ENCODE measurements at regions of chr2 and their contacts with region 1.

Region 1: DNA sequence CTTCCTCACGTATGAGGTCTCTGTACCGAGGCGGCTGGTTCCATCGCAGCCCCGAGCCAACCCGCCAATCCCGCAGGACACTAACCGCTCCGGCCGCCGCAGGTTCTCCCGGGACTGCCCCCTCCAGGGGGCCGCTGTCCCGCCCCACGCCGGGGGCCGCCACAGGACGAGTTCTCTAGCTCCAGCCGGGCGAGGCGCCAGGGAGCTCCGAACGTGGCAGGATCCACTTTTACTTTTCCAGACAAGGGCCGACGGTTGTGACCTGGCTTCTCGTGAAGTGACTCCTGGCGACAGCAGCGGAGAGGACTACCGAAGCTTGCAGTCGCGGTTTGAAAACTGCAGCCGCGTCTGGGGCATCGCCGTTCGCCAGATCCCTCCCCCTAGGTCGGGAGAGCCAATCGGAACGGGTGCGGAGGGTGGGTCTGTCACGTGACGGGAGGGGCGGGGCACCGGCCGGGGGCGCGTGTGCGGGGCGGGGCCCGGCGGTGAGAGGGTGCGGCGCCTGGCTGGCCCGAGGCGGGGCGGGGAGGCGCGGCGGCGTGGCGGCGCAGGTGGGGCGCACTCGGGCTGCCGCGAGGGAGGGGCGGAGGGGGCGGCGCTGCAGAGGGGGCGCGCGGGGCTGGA is at the start of gene STK17B:
- DNase-seq: peak; percentile 97
- ATAC-seq: peak; percentile 70
- H3K4me3 Mint-ChIP-seq: peak within 1 kb of the TSS; percentile 99
- H3K27ac Mint-ChIP-seq: peak within 1 kb of the TSS; percentile 91
- H3K4me1 Mint-ChIP-seq: peaks cover 34% of the 10 kb centered on the region
- H3K27me3 Mint-ChIP-seq: no peaks in the 10 kb centered on the region
- CTCF ChIP-seq: no peak
- total RNA-seq, gene STK17B: 237 to 250 TPM

Region 2: GRCh38 chr2:195656859-195657633 is 514.3 kb before region 1 on chr2 and contains the start of gene SLC39A10:
- CTCF ChIA-PET with region 1: no interaction called
- POLR2A ChIA-PET with region 1: interaction called, 3 read pairs
- intact Hi-C with region 1: loop called (anchors 10 kb)
- DNase-seq: peak; percentile 98
- ATAC-seq: peak; percentile 89
- H3K4me3 Mint-ChIP-seq: peak within 1 kb of the TSS; percentile 95
- H3K27ac Mint-ChIP-seq: peak within 1 kb of the TSS; percentile 100
- H3K4me1 Mint-ChIP-seq: peaks cover 20% of the 10 kb centered on the region
- H3K27me3 Mint-ChIP-seq: no peaks in the 10 kb centered on the region
- CTCF ChIP-seq: no peak
- total RNA-seq, gene SLC39A10: 25.6 to 25.8 TPM

Region 3: DNA sequence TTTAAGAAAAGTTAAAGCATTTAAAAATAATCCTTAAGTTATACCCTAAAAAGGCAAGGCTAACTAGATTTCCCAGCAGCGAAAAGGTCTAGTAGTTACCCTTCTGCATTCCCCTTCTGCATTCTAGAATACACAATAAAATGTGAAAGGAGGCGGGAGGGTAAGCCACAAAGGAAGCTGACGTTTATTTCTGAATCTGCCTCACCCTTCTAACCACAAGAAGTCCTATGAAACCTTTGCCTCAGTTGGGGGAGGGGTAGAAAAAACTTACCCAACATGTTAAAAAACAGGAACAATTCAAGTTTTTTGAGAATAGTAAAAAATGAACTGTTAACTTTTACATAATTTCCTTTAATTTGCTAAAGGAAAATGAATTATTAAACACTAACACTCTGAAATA is 11.3 kb before region 1 on chr2:
- CTCF ChIA-PET with region 1: interaction called, 6 read pairs
- POLR2A ChIA-PET with region 1: interaction called, 145 read pairs
- intact Hi-C with region 1: no loop called
- DNase-seq: peak; percentile 84
- ATAC-seq: peak; percentile 40
- H3K4me3 Mint-ChIP-seq: peak overlapping the region; percentile 99
- H3K27ac Mint-ChIP-seq: peak overlapping the region; percentile 83
- H3K4me1 Mint-ChIP-seq: peaks cover 49% of the 10 kb centered on the region
- H3K27me3 Mint-ChIP-seq: no peaks in the 10 kb centered on the region
- CTCF ChIP-seq: no peak

Region 4: DNA sequence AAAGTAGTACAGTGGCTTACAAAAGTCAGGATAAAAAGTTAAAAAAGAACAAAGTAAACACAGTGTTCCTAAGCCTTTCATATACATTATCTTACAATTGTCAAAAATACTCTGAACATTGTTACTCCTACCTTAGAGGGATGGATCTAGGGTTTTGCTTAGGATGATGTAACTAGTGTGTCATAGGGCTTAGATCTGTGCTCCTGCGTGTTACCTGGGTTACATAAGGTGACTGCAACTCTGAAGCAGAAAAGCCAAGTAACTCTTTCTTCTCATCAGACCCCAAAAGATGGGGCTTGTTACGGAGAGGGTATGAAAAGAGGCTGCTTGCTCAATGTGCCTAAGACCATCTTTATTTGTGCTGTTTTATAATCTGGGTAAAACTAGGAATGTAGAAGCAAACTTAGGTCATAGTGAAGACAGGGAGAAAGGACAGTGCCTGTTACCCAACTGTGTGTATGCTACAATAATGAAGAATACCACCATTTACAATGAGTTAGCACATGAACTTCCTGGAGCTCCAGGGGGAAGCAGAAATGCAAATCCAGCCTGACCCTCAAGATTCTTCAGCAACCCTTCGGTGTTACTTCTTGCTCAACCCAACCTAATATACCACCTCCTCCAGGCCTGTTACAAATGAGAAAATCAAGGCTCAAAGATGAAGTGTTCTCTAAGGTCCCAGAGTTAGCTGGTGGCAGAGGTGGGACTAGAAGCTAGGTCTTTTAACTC is 42.1 kb after region 1 on chr2:
- CTCF ChIA-PET with region 1: no interaction called
- POLR2A ChIA-PET with region 1: interaction called, 10 read pairs
- intact Hi-C with region 1: loop called (anchors 2 kb)
- DNase-seq: no peak
- ATAC-seq: peak; percentile 15
- H3K4me3 Mint-ChIP-seq: no peak overlapping the region
- H3K27ac Mint-ChIP-seq: peak overlapping the region; percentile 99
- H3K4me1 Mint-ChIP-seq: peaks cover 76% of the 10 kb centered on the region
- H3K27me3 Mint-ChIP-seq: no peaks in the 10 kb centered on the region
- CTCF ChIP-seq: no peak

Region 5: GRCh38 chr2:196239622-196240587 is 68.5 kb after region 1 on chr2:
- CTCF ChIA-PET with region 1: interaction called, 27 read pairs
- POLR2A ChIA-PET with region 1: interaction called, 56 read pairs
- intact Hi-C with region 1: loop called (anchors 1 kb)
- DNase-seq: peak; percentile 94
- ATAC-seq: peak; percentile 64
- H3K4me3 Mint-ChIP-seq: peak overlapping the region; percentile 81
- H3K27ac Mint-ChIP-seq: peak overlapping the region; percentile 87
- H3K4me1 Mint-ChIP-seq: peaks cover 70% of the 10 kb centered on the region
- H3K27me3 Mint-ChIP-seq: no peaks in the 10 kb centered on the region
- CTCF ChIP-seq: no peak

Region 6: GRCh38 chr2:196277002-196277401 is 105.6 kb after region 1 on chr2:
- CTCF ChIA-PET with region 1: interaction called, 32 read pairs
- POLR2A ChIA-PET with region 1: interaction called, 23 read pairs
- intact Hi-C with region 1: no loop called
- DNase-seq: peak; percentile 60
- ATAC-seq: peak; percentile 18
- H3K4me3 Mint-ChIP-seq: no peak overlapping the region
- H3K27ac Mint-ChIP-seq: peak overlapping the region; percentile 93
- H3K4me1 Mint-ChIP-seq: peaks cover 54% of the 10 kb centered on the region
- H3K27me3 Mint-ChIP-seq: no peaks in the 10 kb centered on the region
- CTCF ChIP-seq: peak; percentile 72

Region 7: DNA sequence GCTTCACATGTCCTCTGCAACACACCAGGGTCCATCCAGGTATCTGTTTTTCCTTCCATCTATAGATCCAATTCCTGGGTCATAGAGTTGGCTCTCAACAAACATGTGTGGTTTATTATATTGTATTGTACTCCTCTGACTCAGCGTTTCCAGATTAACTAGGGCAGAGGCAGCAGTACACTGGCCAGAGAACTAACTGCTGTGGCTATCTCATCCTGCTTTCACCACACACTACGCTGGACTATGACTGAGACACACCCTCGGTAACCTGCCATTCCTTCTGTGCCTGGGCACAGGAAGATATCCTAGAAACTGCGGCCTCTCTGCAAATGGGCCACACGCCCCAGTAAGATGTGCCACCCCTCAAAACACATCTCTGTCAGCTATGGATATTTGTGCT is 159.8 kb after region 1 on chr2:
- CTCF ChIA-PET with region 1: no interaction called
- POLR2A ChIA-PET with region 1: no interaction called
- intact Hi-C with region 1: no loop called
- DNase-seq: no peak
- ATAC-seq: no peak
- H3K4me3 Mint-ChIP-seq: no peak overlapping the region
- H3K27ac Mint-ChIP-seq: no peak overlapping the region
- H3K4me1 Mint-ChIP-seq: peaks cover 7% of the 10 kb centered on the region
- H3K27me3 Mint-ChIP-seq: no peaks in the 10 kb centered on the region
- CTCF ChIP-seq: no peak

Measured in activated CD8-positive, alpha-beta T cell treated with anti-CD3 and anti-CD28 coated beads for 36 hours (primary cell).